ENCODE measurements at regions of chrX and their contacts with region 1.

Region 1: DNA sequence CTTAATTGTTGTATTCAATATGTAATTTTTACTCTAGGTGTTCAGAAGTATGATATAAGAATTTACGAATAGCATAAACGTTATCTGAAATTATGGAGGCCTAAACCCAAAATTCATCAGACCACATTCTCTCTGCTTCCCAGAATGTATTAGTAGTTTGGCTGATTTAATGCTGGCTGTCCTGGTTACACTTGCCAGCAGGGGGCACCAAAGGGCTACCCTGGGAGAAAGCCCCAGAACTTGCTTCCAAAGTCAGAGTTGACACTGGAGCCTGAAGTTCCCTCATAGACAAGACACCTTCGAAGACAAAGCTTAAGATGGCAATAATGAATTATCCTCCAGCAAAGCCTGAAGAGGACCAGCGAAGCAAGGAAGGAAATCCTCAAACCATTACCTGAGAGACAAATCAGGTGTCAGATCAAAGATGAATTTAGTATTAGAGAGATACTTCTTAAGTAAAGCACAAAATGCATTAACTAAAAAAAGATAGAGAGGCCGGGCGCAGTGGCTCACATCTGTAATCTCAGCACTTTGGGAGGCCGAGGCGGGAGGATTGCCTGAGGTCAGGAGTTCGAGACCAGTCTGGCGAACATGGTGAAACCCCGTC is 11.3 kb upstream of the ANOS1 start:
- DNase-seq: peak; percentile 9
- H3K4me3 Mint-ChIP-seq: no peak overlapping the region
- H3K27ac Mint-ChIP-seq: no peak overlapping the region
- H3K4me1 Mint-ChIP-seq: no peaks in the 10 kb centered on the region
- H3K27me3 Mint-ChIP-seq: no peaks in the 10 kb centered on the region

Region 2: DNA sequence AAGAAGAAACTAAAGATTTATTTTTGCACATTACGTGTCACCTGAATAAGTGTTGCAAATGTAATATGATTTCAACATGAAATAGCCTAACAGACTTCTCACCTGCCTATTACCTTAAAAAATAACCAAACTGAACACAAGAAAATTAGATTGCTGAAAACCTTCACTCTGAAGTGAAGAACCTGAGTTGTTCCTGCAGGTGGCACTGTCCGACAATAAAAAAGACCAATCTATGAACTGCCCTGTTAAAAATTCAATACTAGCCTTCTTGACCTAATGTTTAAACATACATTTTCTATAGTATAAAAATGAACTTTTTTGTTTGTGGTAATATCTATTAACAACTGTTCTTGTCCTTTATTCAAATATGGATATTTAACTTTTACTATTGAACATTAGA is 746.8 kb before region 1 on chrX:
- intact Hi-C with region 1: loop called (anchors 1 kb)
- DNase-seq: no peak
- H3K4me3 Mint-ChIP-seq: no peak overlapping the region
- H3K27ac Mint-ChIP-seq: no peak overlapping the region
- H3K4me1 Mint-ChIP-seq: no peaks in the 10 kb centered on the region
- H3K27me3 Mint-ChIP-seq: no peaks in the 10 kb centered on the region

Region 3: GRCh38 chrX:8731559-8732395 is 11.5 kb before region 1 on chrX and contains the start of gene ANOS1:
- intact Hi-C with region 1: no loop called
- DNase-seq: no peak
- H3K4me3 Mint-ChIP-seq: no peak within 1 kb of the TSS
- H3K27ac Mint-ChIP-seq: no peak within 1 kb of the TSS
- H3K4me1 Mint-ChIP-seq: no peaks in the 10 kb centered on the region
- H3K27me3 Mint-ChIP-seq: peaks cover 17% of the 10 kb centered on the region
- total RNA-seq, gene ANOS1: not detected in 2 replicates

Region 4: GRCh38 chrX:8815464-8816065 is 72.3 kb after region 1 on chrX:
- intact Hi-C with region 1: loop called (anchors 1 kb)
- DNase-seq: peak; percentile 3
- H3K4me3 Mint-ChIP-seq: no peak overlapping the region
- H3K27ac Mint-ChIP-seq: no peak overlapping the region
- H3K4me1 Mint-ChIP-seq: no peaks in the 10 kb centered on the region
- H3K27me3 Mint-ChIP-seq: peaks cover 3% of the 10 kb centered on the region